AG04449 (cell line): ENCODE measurements at regions of chr2 and their contacts with region 1.

Region 1: DNA sequence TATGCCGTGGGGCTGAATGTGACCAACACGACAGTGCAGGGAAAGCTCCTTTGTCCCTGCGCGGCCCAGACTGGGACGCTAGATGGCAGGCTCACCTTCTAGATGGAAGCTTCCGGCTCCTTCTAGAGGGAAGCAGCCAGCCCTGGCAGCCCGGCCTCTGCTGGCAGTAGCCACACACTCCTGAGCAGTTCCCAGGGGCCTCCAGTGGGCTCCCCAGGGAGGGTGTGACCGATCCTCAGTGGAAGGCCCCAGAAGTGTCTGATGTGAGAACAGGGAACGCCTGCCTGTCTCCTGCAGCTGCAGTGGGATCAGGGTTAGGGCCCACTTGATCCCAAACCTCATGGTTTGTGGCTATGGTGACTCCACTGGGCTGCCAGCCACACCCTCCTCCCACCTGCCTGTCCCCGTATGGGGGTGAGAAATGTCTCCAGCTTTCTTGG is 48.5 kb upstream of the LRPPRC start:
- DNase-seq: peak; percentile 12
- H3K4me3 ChIP-seq: no peak overlapping the region
- CTCF ChIP-seq: peak; percentile 93

Region 2: DNA sequence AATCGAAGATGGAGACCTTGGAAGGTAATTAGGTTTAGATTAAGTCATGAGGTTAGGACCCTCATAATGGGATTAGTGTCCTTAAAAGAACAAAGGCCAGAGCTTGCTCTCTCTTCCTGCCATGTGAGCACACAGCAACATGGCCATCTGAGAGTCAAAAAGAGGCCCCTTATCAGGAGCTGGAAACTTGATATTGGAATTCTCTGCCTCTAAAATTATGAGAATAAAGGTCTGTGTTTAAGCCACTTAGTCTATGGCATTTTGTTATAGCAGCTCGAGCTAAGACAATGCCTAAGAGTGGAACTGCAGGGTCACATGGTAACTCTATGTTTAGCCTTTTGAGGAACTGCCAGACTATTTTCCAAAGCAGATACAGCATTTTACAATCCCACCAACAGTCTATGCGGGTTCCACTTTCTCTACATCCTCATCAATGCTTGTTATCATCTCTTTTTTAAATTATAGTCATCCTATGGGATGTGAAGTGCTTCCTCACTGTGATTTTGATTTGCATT is 490.9 kb before region 1 on chr2:
- CTCF ChIA-PET with region 1: no interaction called
- POLR2A ChIA-PET with region 1: no interaction called
- DNase-seq: no peak
- H3K4me3 ChIP-seq: no peak overlapping the region
- CTCF ChIP-seq: no peak

Region 3: DNA sequence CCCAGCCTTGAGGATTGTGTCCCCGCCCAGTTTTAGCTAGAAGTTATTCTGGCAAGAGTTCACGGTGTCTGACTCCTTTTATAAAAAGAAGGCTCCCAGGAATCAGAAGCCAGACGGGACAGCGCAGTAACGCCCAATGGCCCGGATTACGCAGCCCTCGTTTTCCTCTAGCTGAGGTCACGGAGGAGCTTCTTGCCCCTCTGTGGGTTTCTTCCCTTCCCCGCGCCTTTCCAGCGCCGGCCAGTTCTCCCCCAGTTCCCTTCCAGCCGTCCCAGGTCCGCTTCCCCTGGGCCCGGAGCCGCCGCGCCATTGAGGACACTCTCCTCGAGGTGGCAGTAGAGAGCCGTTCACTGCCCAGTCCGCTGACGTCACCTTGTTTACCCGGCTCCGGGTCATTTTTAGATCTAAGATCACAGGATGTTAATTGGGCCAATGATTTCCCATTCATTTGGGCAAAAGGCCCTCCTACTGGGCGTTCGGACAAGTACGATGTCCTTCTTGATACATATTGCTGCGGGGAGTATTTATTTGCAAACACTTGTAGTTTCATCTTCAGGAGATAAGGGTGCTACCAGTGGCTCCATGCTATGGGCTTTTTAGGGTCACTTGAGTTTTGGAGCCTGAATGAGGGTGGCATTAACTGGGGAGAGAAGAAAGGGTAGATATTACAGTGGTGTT is 42.9 kb after region 1 on chr2:
- CTCF ChIA-PET with region 1: interaction called, 16 read pairs
- POLR2A ChIA-PET with region 1: no interaction called
- DNase-seq: no peak
- H3K4me3 ChIP-seq: peak overlapping the region; percentile 58
- CTCF ChIP-seq: peak; percentile 96

Region 4: GRCh38 chr2:44155666-44156446 is 111.6 kb after region 1 on chr2:
- CTCF ChIA-PET with region 1: no interaction called
- POLR2A ChIA-PET with region 1: no interaction called
- DNase-seq: no peak
- H3K4me3 ChIP-seq: no peak overlapping the region
- CTCF ChIP-seq: no peak

Region 5: DNA sequence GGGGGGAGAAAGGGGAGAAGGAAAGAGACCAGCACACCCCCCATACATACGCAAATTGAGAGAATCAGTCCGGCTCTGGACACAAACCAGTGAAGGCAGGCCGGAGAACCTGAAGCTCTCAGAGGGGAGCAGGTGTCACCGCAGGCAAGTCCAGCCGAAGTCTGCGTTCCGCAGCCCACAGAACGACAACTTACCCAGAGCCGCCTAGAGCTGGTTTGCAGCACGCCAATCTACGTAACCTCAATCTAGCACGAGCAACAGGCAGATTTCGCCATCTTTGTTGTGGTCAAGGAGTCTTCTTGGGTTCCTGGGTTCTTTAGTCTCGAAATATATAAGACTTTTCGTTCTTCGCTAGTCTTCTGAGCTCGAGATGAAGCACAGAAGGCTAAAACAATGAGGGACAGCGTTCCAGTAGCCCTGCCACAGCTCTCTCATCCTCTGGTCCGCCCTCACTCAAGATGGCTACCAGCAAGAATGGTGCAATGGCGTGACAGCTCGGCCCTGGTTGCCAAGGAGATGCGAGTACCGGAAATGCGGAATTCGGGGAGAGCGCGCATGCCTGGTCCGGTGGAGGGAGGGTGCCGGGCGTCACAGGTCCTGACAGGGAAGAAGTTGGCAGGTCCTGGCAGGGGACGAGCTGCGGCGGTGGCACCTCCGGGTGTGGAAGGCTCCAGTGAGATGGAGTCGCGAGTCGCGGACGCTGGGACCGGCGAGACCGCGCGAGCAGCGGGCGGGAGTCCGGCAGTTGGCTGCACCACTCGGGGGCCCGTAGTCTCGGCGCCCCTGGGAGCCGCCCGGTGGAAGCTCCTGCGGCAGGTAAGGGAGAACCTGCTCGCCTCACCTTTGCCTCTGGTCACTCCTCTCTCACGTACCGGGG is 317.3 kb after region 1 on chr2 and contains the starts of genes CAMKMT and PREPL:
- CTCF ChIA-PET with region 1: interaction called, 10 read pairs
- POLR2A ChIA-PET with region 1: no interaction called
- DNase-seq: peak; percentile 85
- H3K4me3 ChIP-seq: peak within 1 kb of the TSS; percentile 94
- CTCF ChIP-seq: no peak

Region 6: DNA sequence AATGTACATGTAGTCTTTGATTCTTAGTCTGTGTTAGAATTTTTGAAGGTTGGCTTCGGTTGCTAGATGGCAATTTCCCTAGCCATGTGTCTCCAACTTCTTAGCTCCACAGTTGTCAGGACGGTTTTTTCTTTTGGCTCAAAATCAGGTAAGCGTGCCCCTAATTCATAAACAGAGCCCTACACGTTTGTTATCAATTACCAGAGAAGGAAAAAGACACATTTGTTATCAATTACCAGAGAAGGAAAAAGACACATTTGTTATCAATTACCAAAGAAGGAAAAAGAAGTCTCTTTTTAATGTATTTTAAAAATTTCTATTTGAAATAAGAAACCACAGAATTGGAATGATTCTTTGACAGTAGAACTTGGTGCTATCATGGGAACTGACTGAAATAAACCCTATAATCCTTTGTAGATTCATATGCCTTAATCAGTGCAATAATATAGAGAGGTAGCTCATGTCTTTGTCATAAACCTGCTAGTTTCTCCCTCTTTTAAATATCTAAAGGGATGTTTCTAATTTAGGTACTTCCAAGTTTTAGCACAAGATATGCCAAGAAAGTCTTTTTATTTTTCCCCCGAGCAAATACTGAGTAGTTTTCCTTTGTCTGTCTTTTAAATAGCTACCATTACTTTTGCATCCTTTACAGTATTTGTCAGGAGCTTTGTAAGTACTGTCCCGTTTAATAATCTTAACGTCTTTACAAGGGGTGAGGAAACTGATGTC is 353.3 kb after region 1 on chr2:
- CTCF ChIA-PET with region 1: interaction called, 32 read pairs
- POLR2A ChIA-PET with region 1: no interaction called
- DNase-seq: no peak
- H3K4me3 ChIP-seq: no peak overlapping the region; the same call in 1 of the 2 replicates
- CTCF ChIP-seq: no peak